Endothelial cell of umbilical vein (primary cell): ENCODE measurements at regions of chr1 and their contacts with region 1.

Region 1: DNA sequence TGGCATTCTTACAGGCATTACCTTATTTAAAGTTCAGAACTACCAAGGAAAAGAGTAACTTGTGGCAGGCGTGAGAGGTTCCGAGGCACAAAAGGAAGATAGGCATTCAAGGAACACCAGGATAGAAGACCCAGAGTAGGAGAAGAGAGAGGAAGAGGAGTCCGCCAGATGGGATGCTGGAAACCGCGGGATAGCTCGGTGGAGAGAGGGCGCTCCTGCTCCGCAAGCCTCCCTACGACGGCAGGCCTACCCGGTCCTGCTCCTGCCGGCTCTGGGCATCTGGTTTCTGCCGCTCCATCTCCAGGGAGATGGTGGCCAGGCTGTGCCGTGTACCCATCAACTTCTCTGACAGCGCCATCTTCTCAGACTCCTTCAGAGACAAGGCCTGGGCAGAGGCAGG is 5.4 kb upstream of the NBPF1 start:
- DNase-seq: no peak
- H3K4me3 ChIP-seq: no peak overlapping the region
- H3K27ac ChIP-seq: no peak overlapping the region
- H3K4me1 ChIP-seq: peaks cover 2% of the 10 kb centered on the region
- H3K27me3 ChIP-seq: no peaks in the 10 kb centered on the region
- CTCF ChIP-seq: no peak
- POLR2A ChIP-seq: no peak

Region 2: DNA sequence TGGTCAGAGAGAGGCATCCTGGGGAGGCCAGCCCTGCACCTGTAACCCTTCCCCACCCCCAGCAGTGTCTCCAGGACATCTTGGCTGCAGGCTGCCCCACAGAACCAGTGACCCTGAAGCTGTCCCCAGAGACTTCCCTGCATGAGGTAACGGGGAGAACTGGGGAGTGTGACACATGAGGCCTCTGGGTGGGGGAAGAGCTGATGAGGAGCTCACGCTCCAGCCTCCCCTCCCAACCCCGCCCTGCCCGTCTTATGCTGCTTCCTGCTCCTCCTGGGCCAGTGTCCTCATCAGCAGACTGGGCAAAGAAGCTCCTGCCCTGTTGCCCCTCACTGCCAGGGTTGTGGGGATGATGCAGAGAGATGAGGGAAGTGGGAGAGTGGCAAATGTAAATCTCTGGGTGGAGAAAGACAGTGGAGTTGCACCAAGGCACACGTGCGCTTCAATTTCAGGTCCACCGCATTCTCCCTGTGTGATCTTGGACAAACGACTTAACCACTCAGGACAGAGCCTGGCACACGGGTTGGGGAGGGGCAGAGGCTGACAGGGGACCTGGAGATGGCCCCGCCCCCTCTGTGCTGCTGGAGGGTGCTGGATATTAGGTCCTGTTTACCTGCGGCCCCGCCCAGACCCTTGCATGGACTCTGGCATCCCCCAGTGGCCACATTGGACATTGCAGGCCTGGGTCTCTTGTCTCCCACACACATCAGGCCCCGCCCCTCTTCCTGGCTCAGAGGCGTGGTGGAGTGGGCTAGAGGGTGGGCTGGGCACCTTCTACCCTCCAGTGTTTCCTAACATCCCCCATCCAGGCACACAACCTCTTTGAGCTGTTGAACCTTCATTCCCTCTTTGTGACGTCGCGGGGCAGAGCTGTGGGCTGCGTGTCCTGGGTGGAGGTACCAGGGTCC is 562.9 kb before region 1 on chr1:
- CTCF ChIA-PET with region 1: no interaction called
- POLR2A ChIA-PET with region 1: no interaction called
- dilution Hi-C with region 1: no loop called
- intact Hi-C with region 1: no loop called
- DNase-seq: peak; percentile 78
- H3K4me3 ChIP-seq: no peak overlapping the region
- H3K27ac ChIP-seq: no peak overlapping the region
- H3K4me1 ChIP-seq: no peaks in the 10 kb centered on the region
- H3K27me3 ChIP-seq: peaks cover 0 to 4% of the 10 kb centered on the region in 2 experiments
- CTCF ChIP-seq: peak; percentile 77 to 95
- POLR2A ChIP-seq: no peak

Region 3: GRCh38 chr1:16491056-16491962 is 127.4 kb before region 1 on chr1:
- CTCF ChIA-PET with region 1: no interaction called
- POLR2A ChIA-PET with region 1: no interaction called
- dilution Hi-C with region 1: no loop called
- intact Hi-C with region 1: no loop called
- DNase-seq: no peak
- H3K4me3 ChIP-seq: no peak overlapping the region
- H3K27ac ChIP-seq: no peak overlapping the region
- H3K4me1 ChIP-seq: no peaks in the 10 kb centered on the region
- H3K27me3 ChIP-seq: no peaks in the 10 kb centered on the region
- CTCF ChIP-seq: no peak
- POLR2A ChIP-seq: no peak

Region 4: GRCh38 chr1:16607433-16607851 is 11.3 kb before region 1 on chr1:
- CTCF ChIA-PET with region 1: interaction called, 38 read pairs
- POLR2A ChIA-PET with region 1: no interaction called
- dilution Hi-C with region 1: no loop called
- intact Hi-C with region 1: loop called (anchors 1 kb)
- DNase-seq: no peak
- H3K4me3 ChIP-seq: no peak overlapping the region
- H3K27ac ChIP-seq: no peak overlapping the region
- H3K4me1 ChIP-seq: peaks cover 5% of the 10 kb centered on the region
- H3K27me3 ChIP-seq: no peaks in the 10 kb centered on the region
- CTCF ChIP-seq: no peak
- POLR2A ChIP-seq: no peak

Region 5: GRCh38 chr1:16631248-16632043 is 12.7 kb after region 1 on chr1:
- CTCF ChIA-PET with region 1: interaction called, 13 read pairs
- POLR2A ChIA-PET with region 1: interaction called, 5 read pairs
- dilution Hi-C with region 1: no loop called
- intact Hi-C with region 1: loop called (anchors 2 kb)
- DNase-seq: no peak
- H3K4me3 ChIP-seq: no peak overlapping the region
- H3K27ac ChIP-seq: no peak overlapping the region
- H3K4me1 ChIP-seq: no peaks in the 10 kb centered on the region
- H3K27me3 ChIP-seq: no peaks in the 10 kb centered on the region
- CTCF ChIP-seq: no peak
- POLR2A ChIP-seq: no peak

Region 6: GRCh38 chr1:16644193-16644481 is 25.4 kb after region 1 on chr1:
- CTCF ChIA-PET with region 1: interaction called, 10 read pairs
- POLR2A ChIA-PET with region 1: no interaction called
- dilution Hi-C with region 1: no loop called
- intact Hi-C with region 1: loop called (anchors 2 kb)
- DNase-seq: no peak
- H3K4me3 ChIP-seq: peak overlapping the region; percentile 46 to 82 (median 69)
- H3K27ac ChIP-seq: peak overlapping the region; percentile 45
- H3K4me1 ChIP-seq: peaks cover 8% of the 10 kb centered on the region
- H3K27me3 ChIP-seq: no peaks in the 10 kb centered on the region
- CTCF ChIP-seq: no peak
- POLR2A ChIP-seq: no peak

Region 7: DNA sequence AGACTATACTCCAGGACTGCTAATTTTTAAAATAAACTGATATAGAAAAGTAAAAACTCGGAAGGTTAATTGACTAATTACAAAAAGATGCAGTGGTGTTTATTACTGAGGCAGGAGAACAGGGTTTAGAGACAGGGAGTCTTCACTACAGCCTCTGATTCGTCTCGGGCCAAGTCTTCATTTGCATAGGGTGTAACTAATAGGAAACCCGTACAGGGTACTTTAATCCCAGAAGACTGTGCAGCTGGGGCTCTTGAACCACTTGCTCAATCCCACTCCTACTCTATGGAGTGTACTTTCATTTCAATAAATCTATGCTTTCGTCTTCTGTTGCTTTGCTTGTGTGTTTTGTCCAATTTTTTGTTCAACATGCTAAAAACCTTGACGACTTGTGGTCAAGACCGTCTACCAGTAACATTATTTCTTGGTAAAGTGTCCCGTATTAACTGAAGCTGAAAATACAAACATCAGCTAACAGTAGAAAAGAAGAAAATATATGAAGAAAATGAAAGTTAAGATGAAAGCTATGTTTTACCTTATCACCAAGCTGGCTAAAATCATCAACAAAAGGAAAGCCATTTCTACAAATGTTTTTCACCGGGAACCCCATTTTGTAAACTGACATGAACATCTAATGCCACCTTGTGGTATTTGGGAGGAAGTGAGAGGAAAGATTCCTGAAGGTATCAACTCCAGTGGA is 427.1 kb after region 1 on chr1:
- CTCF ChIA-PET with region 1: interaction called, 4 read pairs
- POLR2A ChIA-PET with region 1: no interaction called
- dilution Hi-C with region 1: no loop called
- intact Hi-C with region 1: loop called (anchors 1 kb)
- DNase-seq: peak; percentile 60
- H3K4me3 ChIP-seq: no peak overlapping the region
- H3K27ac ChIP-seq: no peak overlapping the region
- H3K4me1 ChIP-seq: peaks cover 3% of the 10 kb centered on the region
- H3K27me3 ChIP-seq: no peaks in the 10 kb centered on the region
- CTCF ChIP-seq: peak; percentile 51 to 58
- POLR2A ChIP-seq: no peak